ENCODE measurements at regions of chr17 and their contacts with region 1.

Region 1: DNA sequence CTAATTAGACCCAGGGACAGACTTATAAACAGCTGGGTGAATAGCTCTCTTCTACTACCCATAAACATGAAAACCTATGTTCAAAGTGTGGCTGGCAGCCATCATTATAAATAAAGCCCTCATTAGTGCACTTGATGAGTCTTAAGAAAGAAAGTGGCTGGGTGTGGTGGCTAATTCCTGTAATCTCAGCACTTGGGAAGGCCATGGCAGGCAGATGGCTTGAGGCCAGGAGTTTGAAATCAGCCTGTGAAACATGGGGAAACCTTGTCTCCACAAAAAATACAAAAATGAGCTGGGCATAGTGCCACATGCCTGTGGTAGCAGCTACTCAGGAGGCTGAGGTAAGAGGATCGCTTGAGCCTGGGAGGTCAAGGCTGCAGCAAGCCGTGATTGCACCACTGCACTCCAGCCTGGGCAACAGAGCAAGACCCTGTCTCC is 28.3 kb upstream of the APPBP2 start:
- DNase-seq: peak; percentile 70
- H3K4me3 ChIP-seq: no peak overlapping the region
- H3K27ac ChIP-seq: no peak overlapping the region
- H3K27me3 ChIP-seq: no peaks in the 10 kb centered on the region
- CTCF ChIP-seq: no peak

Region 2: DNA sequence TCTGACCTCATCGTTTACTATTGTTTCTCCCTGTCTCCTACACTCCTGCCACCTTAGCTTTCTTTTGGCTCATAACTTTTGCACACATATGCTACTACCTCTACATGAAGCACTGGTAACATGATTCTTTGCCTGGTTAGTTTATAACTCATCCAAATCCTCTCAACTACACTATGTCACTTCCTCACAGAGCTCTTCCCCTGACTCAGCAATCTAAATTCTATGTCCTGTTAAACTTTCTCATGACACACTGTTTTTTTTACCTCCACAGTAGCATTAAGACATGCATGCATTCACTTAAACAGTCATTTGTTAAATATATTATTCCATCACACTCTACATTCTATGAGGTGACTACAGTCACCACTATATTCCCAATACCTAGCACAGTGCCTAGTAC is 48.1 kb before region 1 on chr17:
- CTCF ChIA-PET with region 1: no interaction called
- POLR2A ChIA-PET with region 1: no interaction called
- DNase-seq: peak; percentile 60
- H3K4me3 ChIP-seq: no peak overlapping the region
- H3K27ac ChIP-seq: peak overlapping the region; percentile 68
- H3K27me3 ChIP-seq: no peaks in the 10 kb centered on the region
- CTCF ChIP-seq: no peak

Region 3: GRCh38 chr17:60568561-60568960 is 14.2 kb after region 1 on chr17:
- CTCF ChIA-PET with region 1: interaction called, 30 read pairs
- POLR2A ChIA-PET with region 1: no interaction called
- DNase-seq: no peak
- H3K4me3 ChIP-seq: no peak overlapping the region
- H3K27ac ChIP-seq: no peak overlapping the region
- H3K27me3 ChIP-seq: no peaks in the 10 kb centered on the region
- CTCF ChIP-seq: no peak

Measured in AG04450 (cell line).